Transverse colon (tissue), 4 donors: ENCODE measurements at regions of chr17 and their contacts with region 1.

Region 1: DNA sequence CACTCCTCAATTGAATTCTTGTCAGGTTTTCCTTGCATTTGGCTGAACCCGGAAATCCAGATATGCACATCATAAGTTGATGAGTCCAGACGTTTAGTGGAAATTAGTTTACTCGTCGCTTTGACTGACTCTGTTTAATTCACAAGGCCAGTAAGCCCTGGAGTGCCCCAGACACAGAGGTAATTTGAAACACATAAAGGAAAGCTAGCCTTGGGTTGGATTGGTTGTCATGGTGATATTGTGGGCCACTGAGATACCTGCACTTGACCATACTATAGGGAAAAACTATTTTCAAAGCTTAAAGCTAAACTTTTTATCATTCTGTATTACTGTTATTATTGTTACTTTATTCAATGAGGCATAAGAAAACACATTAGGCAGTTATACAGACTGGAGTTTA is 178.3 kb upstream of the CA10 start:
- DNase-seq: no peak
- H3K4me3 ChIP-seq: no peak overlapping the region
- H3K27ac ChIP-seq: no peak overlapping the region
- H3K4me1 ChIP-seq: no peaks in the 10 kb centered on the region
- H3K27me3 ChIP-seq: no peaks in the 10 kb centered on the region
- CTCF ChIP-seq: no peak
- EP300 ChIP-seq: no peak
- POLR2A ChIP-seq: no peak

Region 2: DNA sequence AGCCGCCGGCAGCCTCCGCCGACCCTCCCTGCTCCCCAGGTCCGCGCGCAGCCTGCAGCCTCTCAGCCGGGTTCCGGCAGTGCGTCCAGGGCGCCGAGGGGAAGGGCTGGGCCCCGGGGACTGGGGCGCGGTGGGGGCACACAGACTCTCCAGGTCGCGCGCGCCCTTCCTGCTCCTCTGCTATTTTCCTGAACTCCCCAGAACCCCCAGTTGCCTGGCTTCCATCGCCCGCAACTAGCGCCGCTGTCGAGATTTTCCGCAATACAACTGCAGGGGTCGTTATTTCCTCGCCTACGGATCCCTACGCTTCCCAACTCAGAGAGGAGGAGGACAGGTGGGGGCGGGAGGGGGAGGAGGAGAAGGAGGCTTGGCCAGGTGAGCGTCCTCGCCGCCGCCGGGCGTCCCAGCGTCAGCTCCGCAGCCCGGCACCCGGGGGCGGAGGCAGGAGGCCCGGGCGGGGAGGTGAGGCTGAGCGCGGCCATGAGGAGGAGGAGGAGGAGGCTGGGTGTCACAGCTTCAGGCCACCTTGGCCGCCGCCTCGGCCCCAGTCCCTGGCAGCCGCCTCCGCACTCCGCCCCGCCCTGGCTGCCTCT is 178.3 kb before region 1 on chr17 and contains the start of gene CA10:
- in situ Hi-C with region 1: no loop called
- intact Hi-C with region 1: no loop called
- DNase-seq: no peak
- H3K4me3 ChIP-seq: peak within 1 kb of the TSS in 1 of 4 donors; percentile 18
- H3K27ac ChIP-seq: no peak within 1 kb of the TSS
- H3K4me1 ChIP-seq: no peaks in the 10 kb centered on the region
- H3K27me3 ChIP-seq: peaks cover 52% of the 10 kb centered on the region
- CTCF ChIP-seq: no peak
- EP300 ChIP-seq: no peak
- POLR2A ChIP-seq: no peak
- total RNA-seq, gene CA10: 0.96 to 4.1 (median 1.1) TPM in 3 of 4 donors, not detected in the other

Region 3: DNA sequence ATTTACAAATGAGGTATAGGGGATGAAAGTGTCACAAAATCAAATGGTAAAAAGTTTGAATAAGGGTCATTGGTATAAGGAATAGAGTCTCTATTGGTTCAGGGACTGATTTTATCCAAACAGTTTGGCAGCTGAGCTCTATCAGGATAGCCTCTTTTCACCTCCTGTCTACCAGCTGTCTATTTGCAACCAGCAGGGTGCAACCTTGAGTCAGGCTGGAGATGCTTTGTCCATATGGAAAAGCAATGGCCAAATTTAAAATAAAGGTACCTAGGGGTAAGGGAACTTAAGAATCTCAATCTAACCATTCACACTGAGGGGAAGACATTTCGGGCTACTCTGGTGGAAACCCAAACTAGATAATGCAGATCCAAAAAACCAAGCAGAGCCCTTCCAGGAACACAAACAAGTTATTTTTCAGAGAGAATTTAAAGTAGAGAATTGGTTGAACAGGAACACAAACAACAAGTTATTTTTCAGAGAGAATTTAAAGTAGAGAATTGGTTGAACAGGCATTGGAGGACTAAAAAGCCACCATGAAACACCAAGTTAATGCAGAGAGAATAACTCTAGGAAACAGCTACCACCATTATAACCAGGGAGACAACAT is 165.7 kb before region 1 on chr17:
- in situ Hi-C with region 1: no loop called
- intact Hi-C with region 1: no loop called
- DNase-seq: no peak
- H3K4me3 ChIP-seq: no peak overlapping the region
- H3K27ac ChIP-seq: no peak overlapping the region
- H3K4me1 ChIP-seq: no peaks in the 10 kb centered on the region
- H3K27me3 ChIP-seq: no peaks in the 10 kb centered on the region
- CTCF ChIP-seq: peak in 3 of 5 experiments; percentile 26 to 38 (median 30)
- EP300 ChIP-seq: no peak
- POLR2A ChIP-seq: no peak

Region 4: DNA sequence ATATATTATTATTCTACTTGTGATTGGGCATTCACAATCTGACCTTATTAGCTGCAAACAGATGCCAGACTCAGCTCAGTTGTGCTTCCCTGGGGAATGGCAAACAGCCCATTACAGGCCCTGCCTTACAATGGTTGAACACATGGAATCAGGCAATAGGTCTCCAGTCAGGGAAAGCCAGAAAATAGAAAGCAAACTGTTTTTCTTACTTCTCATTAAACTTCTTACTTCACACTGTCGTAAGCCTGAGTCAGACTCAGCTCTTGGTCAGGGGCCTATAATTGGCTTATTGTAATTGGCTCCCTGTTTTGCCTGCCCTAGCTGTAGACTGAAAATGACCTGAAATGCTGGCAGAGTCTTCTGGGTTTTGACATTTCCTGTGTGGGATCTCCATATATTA is 101.3 kb before region 1 on chr17:
- in situ Hi-C with region 1: no loop called
- intact Hi-C with region 1: no loop called
- DNase-seq: no peak
- H3K4me3 ChIP-seq: no peak overlapping the region
- H3K27ac ChIP-seq: no peak overlapping the region
- H3K4me1 ChIP-seq: no peaks in the 10 kb centered on the region
- H3K27me3 ChIP-seq: no peaks in the 10 kb centered on the region
- CTCF ChIP-seq: no peak
- EP300 ChIP-seq: no peak
- POLR2A ChIP-seq: no peak

Region 5: DNA sequence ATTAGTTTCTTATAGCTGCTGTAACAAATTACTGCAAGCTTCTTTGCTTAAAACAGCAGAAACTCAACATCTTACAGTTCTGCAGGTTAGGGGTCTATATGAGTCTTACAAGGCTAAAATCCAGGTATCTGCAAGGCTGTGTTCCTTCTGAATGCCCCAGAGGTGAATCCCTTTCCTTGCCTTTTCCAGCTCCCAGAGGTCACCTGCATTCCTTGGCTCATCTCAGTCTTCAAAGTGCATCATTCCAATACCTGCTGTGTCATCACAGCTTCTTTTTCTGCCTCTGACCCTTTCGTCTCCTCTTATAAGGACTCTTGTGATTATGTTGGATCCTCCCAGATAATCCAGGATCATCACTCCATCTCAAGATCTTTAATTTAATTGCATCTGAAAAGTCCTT is 113.1 kb after region 1 on chr17:
- in situ Hi-C with region 1: loop called in 1 of 4 experiments (anchors 25 kb)
- intact Hi-C with region 1: no loop called
- DNase-seq: no peak
- H3K4me3 ChIP-seq: no peak overlapping the region
- H3K27ac ChIP-seq: no peak overlapping the region
- H3K4me1 ChIP-seq: no peaks in the 10 kb centered on the region
- H3K27me3 ChIP-seq: no peaks in the 10 kb centered on the region
- CTCF ChIP-seq: no peak
- EP300 ChIP-seq: no peak
- POLR2A ChIP-seq: no peak

Region 6: DNA sequence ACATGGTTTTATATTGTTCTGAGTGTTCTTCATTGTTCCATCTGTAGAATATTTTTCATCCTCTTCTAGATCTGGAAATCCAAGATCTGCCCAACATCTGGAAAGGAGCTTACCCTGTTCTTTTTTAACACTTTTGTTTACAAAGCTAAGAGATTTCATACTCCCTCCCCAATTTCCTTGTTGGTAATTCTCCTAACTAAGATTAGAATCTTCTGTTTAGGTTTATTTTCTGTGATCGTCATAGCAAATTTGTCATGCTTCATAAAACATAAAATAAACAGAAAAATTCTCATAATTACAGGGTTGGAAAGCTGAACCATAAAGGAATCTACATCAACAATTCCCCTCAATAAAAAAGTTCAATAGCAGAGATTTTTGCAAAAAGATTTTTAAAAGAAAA is 402.0 kb after region 1 on chr17:
- in situ Hi-C with region 1: no loop called
- intact Hi-C with region 1: no loop called
- DNase-seq: no peak
- H3K4me3 ChIP-seq: no peak overlapping the region
- H3K27ac ChIP-seq: no peak overlapping the region
- H3K4me1 ChIP-seq: no peaks in the 10 kb centered on the region
- H3K27me3 ChIP-seq: no peaks in the 10 kb centered on the region
- CTCF ChIP-seq: no peak
- EP300 ChIP-seq: no peak
- POLR2A ChIP-seq: no peak